Calu3 (cell line): ENCODE measurements at regions of chr7 and their contacts with region 1.

Region 1: GRCh38 chr7:116499168-116500077 is at the start of gene CAV2:
- DNase-seq: peak; percentile 79
- H3K4me3 Mint-ChIP-seq: peak within 1 kb of the TSS; percentile 94
- H3K27ac Mint-ChIP-seq: peak within 1 kb of the TSS; percentile 82
- H3K4me1 Mint-ChIP-seq: peaks cover 30% of the 10 kb centered on the region
- H3K27me3 Mint-ChIP-seq: no peaks in the 10 kb centered on the region
- CTCF ChIP-seq: no peak
- total RNA-seq, gene CAV2: 74.7 and 76.4 TPM in 2 replicates

Region 2: GRCh38 chr7:116258734-116259133 is 240.7 kb before region 1 on chr7:
- CTCF ChIA-PET with region 1: interaction called, 5 read pairs
- intact Hi-C with region 1: loop called (anchors 2 kb)
- DNase-seq: peak; percentile 54
- H3K4me3 Mint-ChIP-seq: no peak overlapping the region
- H3K27ac Mint-ChIP-seq: peak overlapping the region; percentile 69
- H3K4me1 Mint-ChIP-seq: peaks cover 20% of the 10 kb centered on the region
- H3K27me3 Mint-ChIP-seq: no peaks in the 10 kb centered on the region
- CTCF ChIP-seq: peak; percentile 53

Region 3: GRCh38 chr7:116271963-116272839 is 227.2 kb before region 1 on chr7:
- CTCF ChIA-PET with region 1: no interaction called
- intact Hi-C with region 1: loop called (anchors 5 kb)
- DNase-seq: peak; percentile 62
- H3K4me3 Mint-ChIP-seq: peak overlapping the region; percentile 23
- H3K27ac Mint-ChIP-seq: peak overlapping the region; percentile 68
- H3K4me1 Mint-ChIP-seq: peaks cover 52% of the 10 kb centered on the region
- H3K27me3 Mint-ChIP-seq: no peaks in the 10 kb centered on the region
- CTCF ChIP-seq: no peak

Region 4: GRCh38 chr7:116354546-116355408 is 144.6 kb before region 1 on chr7:
- CTCF ChIA-PET with region 1: interaction called, 3 read pairs
- intact Hi-C with region 1: loop called (anchors 2 kb)
- DNase-seq: peak; percentile 84
- H3K4me3 Mint-ChIP-seq: peak overlapping the region; percentile 69
- H3K27ac Mint-ChIP-seq: peak overlapping the region; percentile 98
- H3K4me1 Mint-ChIP-seq: peaks cover 56% of the 10 kb centered on the region
- H3K27me3 Mint-ChIP-seq: no peaks in the 10 kb centered on the region
- CTCF ChIP-seq: no peak

Region 5: GRCh38 chr7:116443101-116443523 is 56.3 kb before region 1 on chr7:
- CTCF ChIA-PET with region 1: interaction called, 5 read pairs
- intact Hi-C with region 1: loop called (anchors 5 kb)
- DNase-seq: peak; percentile 36
- H3K4me3 Mint-ChIP-seq: no peak overlapping the region
- H3K27ac Mint-ChIP-seq: peak overlapping the region; percentile 71
- H3K4me1 Mint-ChIP-seq: peaks cover 65% of the 10 kb centered on the region
- H3K27me3 Mint-ChIP-seq: no peaks in the 10 kb centered on the region
- CTCF ChIP-seq: no peak

Region 6: GRCh38 chr7:116511552-116512519 is 12.4 kb after region 1 on chr7:
- CTCF ChIA-PET with region 1: interaction called, 10 read pairs
- intact Hi-C with region 1: no loop called
- DNase-seq: no peak
- H3K4me3 Mint-ChIP-seq: peak overlapping the region; percentile 71
- H3K27ac Mint-ChIP-seq: peak overlapping the region; percentile 57
- H3K4me1 Mint-ChIP-seq: peaks cover 38% of the 10 kb centered on the region
- H3K27me3 Mint-ChIP-seq: no peaks in the 10 kb centered on the region
- CTCF ChIP-seq: no peak